ENCODE measurements at regions of chr5 and their contacts with region 1.

Region 1: GRCh38 chr5:103258368-103258956 is at the start of gene MACIR:
- DNase-seq: peak; percentile 90 to 97
- H3K4me3 ChIP-seq: peak within 1 kb of the TSS; percentile 61 to 94 (median 88)
- H3K27ac ChIP-seq: peak within 1 kb of the TSS; percentile 78
- H3K4me1 ChIP-seq: peaks cover 0 to 6% (median 0%) of the 10 kb centered on the region in 4 experiments; a peak in 1 of 7 replicates
- H3K27me3 ChIP-seq: no peaks in the 10 kb centered on the region
- CTCF ChIP-seq: no peak
- EP300 ChIP-seq: no peak
- POLR2A ChIP-seq: peak; percentile 65 to 79
- RAD21 ChIP-seq: peak in 1 of 2 experiments; percentile 13; a peak in 2 of 4 replicates
- total RNA-seq, gene MACIR: 17.7 and 19.2 TPM in 2 replicates

Region 2: DNA sequence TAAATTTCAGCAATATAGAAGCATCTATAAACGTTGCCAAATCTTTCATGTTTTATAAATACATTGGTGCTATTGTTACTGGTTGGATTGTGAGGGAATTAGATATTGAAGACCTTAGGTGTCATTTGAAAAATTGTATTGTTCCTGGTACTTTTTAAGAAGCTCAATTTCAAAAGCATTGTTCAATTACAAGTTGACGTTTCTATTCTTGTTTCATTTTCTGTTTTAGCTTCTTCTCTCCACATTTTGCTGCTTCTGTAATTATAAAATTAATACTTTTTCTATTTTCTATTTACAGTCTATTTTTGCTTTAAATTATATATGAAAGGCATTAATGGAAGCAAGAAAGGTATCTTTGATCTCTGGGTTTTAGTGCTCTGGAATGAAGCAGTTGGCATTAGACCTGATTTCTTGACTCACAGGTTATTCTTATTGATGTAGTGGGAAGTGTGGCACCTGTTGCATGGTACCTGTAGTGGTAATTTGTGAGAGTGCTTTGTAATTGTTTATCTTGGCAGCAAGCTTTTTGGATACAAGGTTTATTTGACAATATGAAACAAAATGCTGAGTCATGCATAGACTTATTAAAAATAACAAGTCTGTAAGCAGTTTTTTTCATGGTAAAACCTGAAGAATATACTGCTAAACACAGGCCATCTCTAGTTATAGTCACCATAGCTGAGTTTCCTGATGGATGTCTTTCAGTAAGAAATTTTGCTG is 13.3 kb after region 1 on chr5:
- CTCF ChIA-PET with region 1: interaction called, 10 read pairs
- POLR2A ChIA-PET with region 1: interaction called, 7 read pairs
- DNase-seq: no peak
- H3K4me3 ChIP-seq: no peak overlapping the region
- H3K27ac ChIP-seq: no peak overlapping the region
- H3K4me1 ChIP-seq: peaks cover 0 to 5% (median 1%) of the 10 kb centered on the region in 4 experiments; a peak in 2 of 7 replicates
- H3K27me3 ChIP-seq: no peaks in the 10 kb centered on the region
- CTCF ChIP-seq: no peak
- EP300 ChIP-seq: no peak
- POLR2A ChIP-seq: no peak
- RAD21 ChIP-seq: no peak

Region 3: GRCh38 chr5:103333376-103333775 is 74.9 kb after region 1 on chr5:
- CTCF ChIA-PET with region 1: no interaction called
- POLR2A ChIA-PET with region 1: no interaction called
- DNase-seq: no peak
- H3K4me3 ChIP-seq: no peak overlapping the region
- H3K27ac ChIP-seq: no peak overlapping the region
- H3K4me1 ChIP-seq: no peaks in the 10 kb centered on the region
- H3K27me3 ChIP-seq: no peaks in the 10 kb centered on the region
- CTCF ChIP-seq: no peak
- EP300 ChIP-seq: no peak
- POLR2A ChIP-seq: no peak
- RAD21 ChIP-seq: no peak

Measured in H1 (cell line).